ENCODE measurements at regions of chr1 and their contacts with region 1.

Region 1: GRCh38 chr1:165392634-165393571 is 36.4 kb upstream of the LMX1A start:
- DNase-seq: peak; percentile 71 to 83 (median 74)
- ATAC-seq: peak; percentile 84
- H3K4me3 ChIP-seq: no peak overlapping the region
- H3K27ac ChIP-seq: no peak overlapping the region
- H3K4me1 ChIP-seq: peaks cover 5% of the 10 kb centered on the region
- H3K27me3 ChIP-seq: no peaks in the 10 kb centered on the region
- CTCF ChIP-seq: peak; percentile 84 to 94 (median 86)
- POLR2A ChIP-seq: no peak

Region 2: GRCh38 chr1:165592945-165593823 is 200.3 kb after region 1 on chr1:
- intact Hi-C with region 1: loop called (anchors 5 kb)
- DNase-seq: peak; percentile 80 to 89 (median 86)
- ATAC-seq: peak; percentile 69
- H3K4me3 ChIP-seq: no peak overlapping the region
- H3K27ac ChIP-seq: no peak overlapping the region
- H3K4me1 ChIP-seq: peaks cover 6% of the 10 kb centered on the region
- H3K27me3 ChIP-seq: no peaks in the 10 kb centered on the region
- CTCF ChIP-seq: peak; percentile 88 to 97 (median 95)
- POLR2A ChIP-seq: no peak

Region 3: GRCh38 chr1:165753934-165754333 is 361.0 kb after region 1 on chr1:
- intact Hi-C with region 1: no loop called
- DNase-seq: no peak
- ATAC-seq: no peak
- H3K4me3 ChIP-seq: no peak overlapping the region
- H3K27ac ChIP-seq: no peak overlapping the region
- H3K4me1 ChIP-seq: no peaks in the 10 kb centered on the region
- H3K27me3 ChIP-seq: no peaks in the 10 kb centered on the region
- CTCF ChIP-seq: no peak
- POLR2A ChIP-seq: no peak